AG04450 (cell line): ENCODE measurements at regions of chr3 and their contacts with region 1.

Region 1: GRCh38 chr3:171480526-171480925 is 20.3 kb upstream of the TNIK start:
- DNase-seq: no peak
- H3K4me3 ChIP-seq: no peak overlapping the region
- H3K27ac ChIP-seq: no peak overlapping the region
- H3K27me3 ChIP-seq: no peaks in the 10 kb centered on the region
- CTCF ChIP-seq: no peak

Region 2: GRCh38 chr3:171269542-171269941 is 211.0 kb before region 1 on chr3:
- CTCF ChIA-PET with region 1: no interaction called
- POLR2A ChIA-PET with region 1: no interaction called
- DNase-seq: no peak
- H3K4me3 ChIP-seq: no peak overlapping the region
- H3K27ac ChIP-seq: no peak overlapping the region
- H3K27me3 ChIP-seq: no peaks in the 10 kb centered on the region
- CTCF ChIP-seq: no peak

Region 3: GRCh38 chr3:171459942-171460724 is 20.4 kb before region 1 on chr3 and contains the start of gene TNIK:
- CTCF ChIA-PET with region 1: interaction called, 10 read pairs
- POLR2A ChIA-PET with region 1: no interaction called
- DNase-seq: peak; percentile 76
- H3K4me3 ChIP-seq: peak within 1 kb of the TSS; percentile 89
- H3K27ac ChIP-seq: peak within 1 kb of the TSS; percentile 69
- H3K27me3 ChIP-seq: no peaks in the 10 kb centered on the region
- CTCF ChIP-seq: peak; percentile 46
- polyA plus RNA-seq, gene TNIK: 9.0 and 9.5 TPM in 2 replicates